Activated naive CD4-positive, alpha-beta T cell treated with anti-CD3 and anti-CD28 coated beads for 36 hours (primary cell): ENCODE measurements at regions of chr2 and their contacts with region 1.

Region 1: DNA sequence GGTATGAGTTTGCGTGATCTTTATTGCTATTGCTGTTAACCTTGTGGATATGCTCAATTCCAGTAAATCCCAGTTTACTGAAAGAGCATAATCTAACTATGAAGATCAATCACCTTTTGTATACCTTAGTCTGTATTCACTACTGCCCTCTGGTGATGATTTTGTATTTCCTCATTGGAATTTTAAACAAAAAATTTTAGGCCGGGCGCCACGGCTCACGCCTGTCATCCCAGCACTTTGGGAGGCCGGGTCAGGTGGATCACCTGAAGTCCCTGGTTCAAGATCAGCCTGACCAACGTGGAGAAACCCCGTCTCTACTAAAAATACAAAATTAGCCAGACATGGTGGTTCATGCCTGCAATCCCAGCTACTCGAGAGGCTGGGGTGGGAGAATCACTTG is 5.1 kb downstream of the COMMD1 start:
- DNase-seq: no peak
- H3K4me3 Mint-ChIP-seq: no peak overlapping the region
- H3K27ac Mint-ChIP-seq: no peak overlapping the region
- H3K4me1 Mint-ChIP-seq: peaks cover 25% of the 10 kb centered on the region
- H3K27me3 Mint-ChIP-seq: no peaks in the 10 kb centered on the region

Region 2: GRCh38 chr2:62774555-62775366 is 864.2 kb after region 1 on chr2:
- CTCF ChIA-PET with region 1: no interaction called
- intact Hi-C with region 1: loop called (anchors 5 kb)
- DNase-seq: no peak
- H3K4me3 Mint-ChIP-seq: no peak overlapping the region
- H3K27ac Mint-ChIP-seq: no peak overlapping the region
- H3K4me1 Mint-ChIP-seq: peaks cover 1% of the 10 kb centered on the region
- H3K27me3 Mint-ChIP-seq: no peaks in the 10 kb centered on the region